A673 (cell line): ENCODE measurements at regions of chr20 and their contacts with region 1.

Region 1: DNA sequence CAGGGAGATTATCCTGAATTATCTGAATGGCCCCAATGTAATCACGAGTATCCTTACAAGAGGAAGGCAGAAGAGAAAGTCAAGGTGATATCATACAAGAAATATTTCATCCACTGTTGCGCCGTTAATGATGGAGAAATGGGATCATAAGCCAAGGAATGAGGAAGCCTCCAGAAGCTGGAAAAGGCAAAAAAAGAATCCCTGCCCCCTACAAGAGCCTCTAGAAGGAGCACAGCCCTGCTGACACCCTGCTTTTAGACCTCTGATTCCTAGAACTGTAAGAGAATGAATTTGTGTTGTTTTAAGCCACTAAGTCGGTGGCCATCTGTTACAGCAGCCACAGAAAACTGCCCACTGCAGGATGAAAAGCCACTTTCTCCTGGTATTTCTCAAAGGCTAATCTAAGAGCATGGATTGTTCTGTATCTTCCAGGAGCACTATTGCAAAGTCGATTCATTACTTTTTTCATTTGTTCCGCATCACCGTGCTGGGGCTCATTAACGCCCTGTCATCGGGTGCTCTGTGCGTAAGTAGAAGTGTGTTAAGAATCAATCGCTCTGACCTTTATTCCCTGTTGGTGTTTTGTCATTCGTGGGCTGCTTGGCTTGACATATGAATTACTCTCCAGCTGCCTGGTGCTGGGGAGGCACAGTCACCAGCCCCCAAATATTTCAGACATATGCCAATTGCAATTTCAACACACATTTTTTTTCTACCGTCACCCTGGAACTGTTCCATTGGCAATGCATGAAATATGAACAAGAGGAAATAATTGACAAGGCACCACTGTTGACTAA is 117.0 kb downstream of the PCSK2 start:
- DNase-seq: peak; percentile 78
- H3K4me3 ChIP-seq: peak overlapping the region; percentile 6
- H3K27ac ChIP-seq: peak overlapping the region; percentile 69
- H3K4me1 ChIP-seq: peaks cover 62% of the 10 kb centered on the region
- H3K27me3 ChIP-seq: no peaks in the 10 kb centered on the region
- CTCF ChIP-seq: no peak

Region 2: GRCh38 chr20:15992564-15992963 is 1351.3 kb before region 1 on chr20:
- CTCF ChIA-PET with region 1: no interaction called
- POLR2A ChIA-PET with region 1: no interaction called
- intact Hi-C with region 1: no loop called
- DNase-seq: no peak
- H3K4me3 ChIP-seq: no peak overlapping the region
- H3K27ac ChIP-seq: no peak overlapping the region
- H3K4me1 ChIP-seq: no peaks in the 10 kb centered on the region
- H3K27me3 ChIP-seq: no peaks in the 10 kb centered on the region
- CTCF ChIP-seq: no peak

Region 3: DNA sequence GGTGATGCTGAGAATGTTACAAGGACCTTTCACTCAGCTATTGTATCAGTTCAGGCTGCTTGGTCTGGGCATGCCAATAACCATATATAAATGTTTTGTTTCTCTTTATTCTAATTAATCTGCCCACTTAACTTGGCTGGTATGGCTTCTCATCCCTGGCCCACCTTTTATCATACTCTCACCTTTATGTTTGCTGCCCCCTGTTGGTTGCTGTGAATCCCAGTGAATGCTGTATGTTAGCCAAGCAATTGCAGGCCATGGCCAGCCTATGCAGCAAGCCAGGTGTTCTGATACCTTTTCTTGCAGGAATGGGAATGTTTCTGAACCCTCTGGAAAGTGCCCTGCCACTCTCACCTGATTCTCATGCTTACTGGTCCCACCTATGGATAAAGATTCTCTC is 62.4 kb before region 1 on chr20:
- CTCF ChIA-PET with region 1: no interaction called
- POLR2A ChIA-PET with region 1: no interaction called
- intact Hi-C with region 1: loop called (anchors 2 kb)
- DNase-seq: peak; percentile 49
- H3K4me3 ChIP-seq: no peak overlapping the region
- H3K27ac ChIP-seq: no peak overlapping the region
- H3K4me1 ChIP-seq: peaks cover 55% of the 10 kb centered on the region
- H3K27me3 ChIP-seq: no peaks in the 10 kb centered on the region
- CTCF ChIP-seq: peak; percentile 72